Activated naive CD4-positive, alpha-beta T cell treated with anti-CD3 and anti-CD28 coated beads, Interleukin-2, amount 10 ng/mL, durations not matched to agents 7 days and 5 days (primary cell): ENCODE measurements at regions of chr3 and their contacts with region 1.

Region 1: DNA sequence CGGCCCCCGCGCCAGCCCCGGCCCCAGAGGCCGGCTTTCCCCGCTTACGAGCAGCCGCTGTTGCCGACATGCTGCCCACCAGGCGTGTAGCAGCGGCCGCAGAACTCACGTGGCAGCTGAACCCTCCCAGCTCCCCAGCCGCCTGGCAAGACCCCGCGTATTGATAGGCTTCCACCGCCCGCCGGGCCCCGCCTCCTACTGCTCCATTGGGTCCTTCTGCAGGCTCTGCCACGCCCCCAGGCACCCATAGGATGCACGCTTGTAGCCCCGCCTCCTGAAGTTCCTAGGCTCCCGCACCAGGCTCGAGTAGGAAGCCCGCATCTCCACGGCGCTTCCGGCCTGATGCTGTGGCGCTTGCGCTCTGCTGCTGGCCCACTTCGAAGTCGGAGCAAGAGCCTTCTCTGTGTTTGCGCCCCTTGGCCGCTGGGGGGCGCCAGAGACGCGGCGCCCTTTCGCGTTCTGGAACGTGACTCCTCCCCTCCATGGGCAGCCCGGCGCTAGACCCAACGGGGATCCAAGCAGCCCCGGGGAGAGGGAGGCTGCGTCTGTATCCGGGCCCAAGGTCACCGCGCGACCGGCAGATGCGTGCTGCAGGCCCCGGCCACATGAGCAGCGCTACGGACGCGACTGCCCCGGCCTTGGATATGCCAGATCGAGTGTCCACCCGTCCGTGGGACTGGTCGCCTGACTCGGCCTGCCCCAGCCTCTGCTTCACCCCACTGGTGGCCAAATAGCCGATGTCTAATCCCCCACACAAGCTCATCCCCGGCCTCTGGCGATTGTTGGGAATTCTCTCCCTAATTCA is at the starts of genes PARP3 and RRP9:
- DNase-seq: peak; percentile 100
- H3K4me3 Mint-ChIP-seq: peak within 1 kb of the TSS; percentile 87
- H3K27ac Mint-ChIP-seq: peak within 1 kb of the TSS; percentile 91
- H3K4me1 Mint-ChIP-seq: peaks cover 39% of the 10 kb centered on the region
- H3K27me3 Mint-ChIP-seq: no peaks in the 10 kb centered on the region

Region 2: DNA sequence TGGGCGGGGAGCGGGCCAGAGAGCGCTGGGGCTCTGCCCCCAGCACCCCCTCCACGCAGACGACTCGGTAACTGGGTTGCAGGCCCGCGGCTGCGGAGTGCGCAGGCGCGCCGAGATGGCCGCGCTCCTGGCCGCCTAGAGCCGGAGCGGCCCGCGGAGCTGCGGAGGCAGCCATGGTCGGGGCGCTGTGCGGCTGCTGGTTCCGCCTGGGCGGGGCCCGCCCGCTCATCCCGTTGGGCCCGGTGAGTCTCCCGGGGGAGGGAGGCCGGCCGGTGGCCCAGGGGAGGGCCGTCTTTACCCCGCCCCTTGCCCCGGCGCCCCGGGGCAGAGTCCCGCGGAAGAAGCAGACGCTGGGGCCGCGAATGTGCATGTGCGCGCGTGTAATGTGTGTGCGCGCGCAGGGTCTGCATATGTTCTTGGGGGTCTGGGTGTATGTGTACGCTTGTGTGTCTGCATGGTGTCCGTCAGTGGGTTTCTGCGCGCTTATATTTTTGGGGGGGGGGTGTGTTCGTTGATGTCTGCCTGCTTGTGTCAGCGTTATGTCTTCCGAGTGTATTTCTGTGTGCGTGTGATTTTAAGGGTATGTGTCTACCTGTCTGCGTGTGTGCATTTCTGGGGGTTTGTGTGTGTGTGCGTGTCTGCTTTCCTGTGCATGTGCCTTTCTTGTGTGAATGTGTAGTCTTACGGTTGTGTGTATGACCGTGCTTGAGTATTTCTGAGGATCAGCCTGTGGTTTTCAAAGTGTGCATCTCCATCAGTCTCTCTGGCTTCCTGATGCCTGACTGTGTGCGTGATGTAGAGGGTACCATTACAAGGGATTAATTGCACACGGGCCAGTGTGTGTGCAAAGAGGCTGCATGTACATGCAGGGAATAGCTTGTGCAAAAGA is 33.2 kb after region 1 on chr3 and contains the start of gene ABHD14A:
- CTCF ChIA-PET with region 1: interaction called, 24 read pairs
- DNase-seq: peak; percentile 80
- H3K4me3 Mint-ChIP-seq: peak within 1 kb of the TSS; percentile 95
- H3K27ac Mint-ChIP-seq: peak within 1 kb of the TSS; percentile 90
- H3K4me1 Mint-ChIP-seq: peaks cover 42% of the 10 kb centered on the region
- H3K27me3 Mint-ChIP-seq: no peaks in the 10 kb centered on the region

Region 3: DNA sequence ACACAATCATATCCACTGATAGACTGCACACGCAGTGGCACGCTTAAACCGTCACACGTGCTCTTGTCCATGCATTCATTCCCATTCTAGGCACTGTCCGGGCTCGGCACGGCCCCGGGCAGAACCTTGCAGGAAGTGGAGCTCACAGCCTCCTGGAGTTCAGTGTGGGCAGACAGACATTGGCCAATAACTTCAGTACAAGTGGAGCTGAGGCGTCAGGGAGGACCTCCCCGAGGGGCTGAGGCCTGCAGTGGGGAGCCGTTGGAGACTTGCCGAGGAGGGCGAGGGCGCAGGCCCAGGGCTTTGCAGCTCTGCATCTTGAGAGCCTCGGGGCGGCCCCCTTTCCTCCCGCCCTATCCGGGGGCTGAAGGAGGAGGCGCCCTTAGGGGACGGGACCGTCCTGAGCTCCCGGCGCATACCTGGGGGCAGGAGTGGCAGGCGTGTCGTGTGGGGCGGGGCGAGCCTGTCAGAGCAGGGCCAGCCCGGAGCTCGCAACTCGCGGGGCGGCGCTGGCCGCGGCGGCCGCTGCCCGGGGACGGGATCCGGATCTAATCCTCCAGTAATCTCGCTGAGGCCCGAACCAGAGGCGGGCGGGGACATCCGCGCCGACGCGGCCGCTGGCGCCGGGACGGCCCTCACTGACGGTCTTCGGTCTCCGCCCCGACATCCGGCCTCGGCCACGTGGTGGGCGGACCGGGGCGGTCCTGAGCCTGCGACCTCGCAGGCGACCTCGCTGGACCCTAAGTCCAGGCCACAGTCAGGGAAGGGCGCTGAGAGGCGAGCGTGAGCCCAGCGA is 41.0 kb after region 1 on chr3 and contains the start of gene ACY1:
- CTCF ChIA-PET with region 1: interaction called, 14 read pairs
- DNase-seq: peak; percentile 86
- H3K4me3 Mint-ChIP-seq: peak within 1 kb of the TSS; percentile 98
- H3K27ac Mint-ChIP-seq: peak within 1 kb of the TSS; percentile 95
- H3K4me1 Mint-ChIP-seq: peaks cover 32% of the 10 kb centered on the region
- H3K27me3 Mint-ChIP-seq: no peaks in the 10 kb centered on the region